ENCODE measurements at regions of chr6 and their contacts with region 1.

Region 1: DNA sequence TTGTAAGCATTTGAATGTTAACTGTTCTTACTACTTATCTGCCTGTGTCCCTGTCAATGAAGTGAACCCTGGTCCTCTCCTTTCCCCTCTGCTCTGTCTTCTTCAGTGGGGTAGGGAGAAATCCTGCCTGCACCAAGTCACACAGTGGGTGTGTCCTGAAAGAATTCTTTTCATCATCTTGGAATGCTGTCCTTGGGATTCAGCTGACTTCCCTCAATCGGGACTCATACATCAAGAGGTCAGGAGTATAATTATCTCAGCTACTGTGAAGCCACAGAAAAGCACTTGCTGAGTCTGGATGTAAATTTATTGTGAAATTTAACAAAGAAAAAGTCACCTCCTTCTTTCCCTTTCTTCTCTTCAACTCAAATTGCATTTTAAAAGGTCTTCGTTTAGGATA is 328.5 kb downstream of the SOX4 start:
- DNase-seq: no peak
- ATAC-seq: no peak
- H3K4me3 ChIP-seq: no peak overlapping the region
- H3K4me3 Mint-ChIP-seq: no peak overlapping the region
- H3K27ac ChIP-seq: no peak overlapping the region
- H3K27ac Mint-ChIP-seq: no peak overlapping the region
- H3K4me1 ChIP-seq: peaks cover 4% of the 10 kb centered on the region
- H3K4me1 Mint-ChIP-seq: peaks cover 18 to 28% of the 10 kb centered on the region in 2 donors
- H3K27me3 ChIP-seq: no peaks in the 10 kb centered on the region
- H3K27me3 Mint-ChIP-seq: no peaks in the 10 kb centered on the region
- CTCF ChIP-seq: no peak

Region 2: DNA sequence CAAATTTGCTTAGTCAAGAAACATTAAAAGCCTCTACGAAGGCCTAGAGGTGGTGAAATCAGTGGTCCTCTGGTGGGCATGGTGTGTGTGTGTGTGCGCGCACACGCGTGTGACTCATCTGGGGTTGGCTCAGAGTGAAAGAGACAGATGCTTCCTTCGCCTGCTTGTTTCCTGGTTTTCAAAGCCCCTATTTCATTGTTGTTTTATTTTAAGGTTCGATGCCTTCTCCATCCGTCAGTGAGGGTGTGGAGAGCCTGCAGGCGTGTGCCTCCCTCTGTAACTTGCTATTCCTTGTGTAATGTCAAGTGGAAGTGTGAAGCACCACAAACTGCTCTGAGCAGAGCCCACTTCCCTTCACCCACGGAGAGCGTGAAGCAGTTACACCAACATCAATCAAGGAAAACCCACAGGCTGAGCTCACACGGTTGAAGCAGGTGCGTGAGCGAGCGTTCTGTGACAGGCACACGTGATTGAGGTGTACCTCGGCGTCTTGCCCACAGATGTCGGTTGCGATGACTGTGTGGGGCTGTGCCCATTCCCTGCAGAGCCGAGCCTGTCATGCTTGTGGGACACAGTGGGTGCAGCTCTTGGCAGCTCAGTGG is 140.8 kb after region 1 on chr6:
- intact Hi-C with region 1: loop called (anchors 10 kb)
- DNase-seq: peak; percentile 33 to 78
- ATAC-seq: peak; percentile 74 to 85 (median 75)
- H3K4me3 ChIP-seq: no peak overlapping the region
- H3K4me3 Mint-ChIP-seq: peak overlapping the region; percentile 75
- H3K27ac ChIP-seq: no peak overlapping the region
- H3K27ac Mint-ChIP-seq: peak overlapping the region; percentile 54 to 76
- H3K4me1 ChIP-seq: peaks cover 13% of the 10 kb centered on the region
- H3K4me1 Mint-ChIP-seq: peaks cover 11 to 12% of the 10 kb centered on the region in 2 donors
- H3K27me3 ChIP-seq: no peaks in the 10 kb centered on the region
- H3K27me3 Mint-ChIP-seq: peaks cover 0 to 3% of the 10 kb centered on the region in 2 donors
- CTCF ChIP-seq: no peak

Region 3: DNA sequence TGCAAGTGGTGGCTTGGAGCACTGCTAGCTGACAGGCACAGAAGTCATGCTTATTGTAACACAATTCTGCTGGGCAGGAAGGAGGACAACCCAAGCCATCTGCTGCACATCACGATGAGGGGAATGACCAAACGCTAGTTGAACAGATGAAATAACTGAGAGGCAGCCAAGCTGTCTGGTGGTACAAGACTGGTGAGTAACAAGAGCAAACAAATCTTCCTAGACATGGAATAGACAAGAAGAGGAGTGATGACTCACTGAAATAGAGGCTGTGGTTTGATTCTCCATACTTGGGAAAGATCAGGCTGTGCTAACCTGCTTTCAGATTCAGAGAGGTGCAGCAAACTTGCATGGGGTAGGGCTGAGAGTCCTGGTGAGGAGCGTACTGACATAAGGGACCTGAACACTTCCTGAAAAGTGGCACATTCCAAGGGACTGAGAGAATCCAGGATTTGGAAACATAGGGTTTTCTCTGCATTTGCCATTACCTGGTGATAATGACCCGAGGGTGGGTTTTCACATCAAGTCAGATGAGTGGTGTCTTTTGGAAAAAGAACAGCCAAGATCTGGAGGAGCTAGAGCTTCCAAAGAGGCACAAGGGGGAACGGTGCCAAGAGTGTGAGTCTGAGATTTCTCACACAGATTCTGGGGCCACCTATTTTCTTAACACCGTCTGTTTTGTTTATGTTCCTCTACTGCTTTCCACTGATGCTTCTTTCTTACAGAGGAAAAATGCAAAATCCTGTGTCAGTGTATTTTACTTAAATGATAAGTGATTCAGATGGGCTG is 314.7 kb after region 1 on chr6:
- intact Hi-C with region 1: no loop called
- DNase-seq: no peak
- ATAC-seq: no peak
- H3K4me3 ChIP-seq: no peak overlapping the region
- H3K4me3 Mint-ChIP-seq: no peak overlapping the region
- H3K27ac ChIP-seq: no peak overlapping the region
- H3K27ac Mint-ChIP-seq: no peak overlapping the region
- H3K4me1 ChIP-seq: no peaks in the 10 kb centered on the region
- H3K4me1 Mint-ChIP-seq: no peaks in the 10 kb centered on the region
- H3K27me3 ChIP-seq: no peaks in the 10 kb centered on the region
- H3K27me3 Mint-ChIP-seq: no peaks in the 10 kb centered on the region
- CTCF ChIP-seq: no peak

Measured in natural killer cell (primary cell).